ENCODE measurements at regions of chr19 and their contacts with region 1.

Region 1: GRCh38 chr19:3275583-3276340 is 51.3 kb downstream of the CELF5 start:
- DNase-seq: peak; percentile 99
- ATAC-seq: peak; percentile 83
- H3K4me3 Mint-ChIP-seq: peak overlapping the region; percentile 73
- H3K27ac Mint-ChIP-seq: peak overlapping the region; percentile 80
- H3K4me1 Mint-ChIP-seq: peaks cover 8% of the 10 kb centered on the region
- H3K27me3 Mint-ChIP-seq: peaks cover 9% of the 10 kb centered on the region

Region 2: DNA sequence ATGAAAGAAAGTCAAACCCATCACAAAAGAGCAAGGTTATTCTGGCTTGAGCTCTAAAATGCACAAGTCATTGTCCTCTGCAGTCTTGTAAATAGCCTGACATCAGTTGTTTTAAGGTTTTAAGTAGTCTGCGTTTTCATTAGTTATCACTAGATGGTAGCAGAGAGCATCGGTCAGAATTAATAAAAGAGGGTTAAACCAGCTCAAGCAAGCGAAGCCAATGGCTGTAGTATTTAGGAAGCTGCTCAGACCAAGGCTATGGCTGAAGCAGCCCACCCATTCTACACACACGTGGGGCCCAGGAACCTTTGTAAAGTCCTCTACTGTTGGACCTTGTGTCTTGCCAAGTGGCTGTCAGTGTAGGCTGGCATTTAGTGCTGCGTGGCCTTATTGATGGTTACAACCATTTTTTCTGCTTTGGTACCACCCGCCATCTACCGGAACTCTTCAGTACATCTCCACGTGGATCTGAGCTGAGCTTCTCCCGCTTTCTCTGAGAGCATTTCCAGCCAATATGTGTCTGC is 388.3 kb before region 1 on chr19:
- CTCF ChIA-PET with region 1: no interaction called
- POLR2A ChIA-PET with region 1: no interaction called
- intact Hi-C with region 1: no loop called
- DNase-seq: no peak
- ATAC-seq: peak; percentile 66
- H3K4me3 Mint-ChIP-seq: no peak overlapping the region
- H3K27ac Mint-ChIP-seq: peak overlapping the region; percentile 2
- H3K4me1 Mint-ChIP-seq: peaks cover 5% of the 10 kb centered on the region
- H3K27me3 Mint-ChIP-seq: no peaks in the 10 kb centered on the region

Region 3: DNA sequence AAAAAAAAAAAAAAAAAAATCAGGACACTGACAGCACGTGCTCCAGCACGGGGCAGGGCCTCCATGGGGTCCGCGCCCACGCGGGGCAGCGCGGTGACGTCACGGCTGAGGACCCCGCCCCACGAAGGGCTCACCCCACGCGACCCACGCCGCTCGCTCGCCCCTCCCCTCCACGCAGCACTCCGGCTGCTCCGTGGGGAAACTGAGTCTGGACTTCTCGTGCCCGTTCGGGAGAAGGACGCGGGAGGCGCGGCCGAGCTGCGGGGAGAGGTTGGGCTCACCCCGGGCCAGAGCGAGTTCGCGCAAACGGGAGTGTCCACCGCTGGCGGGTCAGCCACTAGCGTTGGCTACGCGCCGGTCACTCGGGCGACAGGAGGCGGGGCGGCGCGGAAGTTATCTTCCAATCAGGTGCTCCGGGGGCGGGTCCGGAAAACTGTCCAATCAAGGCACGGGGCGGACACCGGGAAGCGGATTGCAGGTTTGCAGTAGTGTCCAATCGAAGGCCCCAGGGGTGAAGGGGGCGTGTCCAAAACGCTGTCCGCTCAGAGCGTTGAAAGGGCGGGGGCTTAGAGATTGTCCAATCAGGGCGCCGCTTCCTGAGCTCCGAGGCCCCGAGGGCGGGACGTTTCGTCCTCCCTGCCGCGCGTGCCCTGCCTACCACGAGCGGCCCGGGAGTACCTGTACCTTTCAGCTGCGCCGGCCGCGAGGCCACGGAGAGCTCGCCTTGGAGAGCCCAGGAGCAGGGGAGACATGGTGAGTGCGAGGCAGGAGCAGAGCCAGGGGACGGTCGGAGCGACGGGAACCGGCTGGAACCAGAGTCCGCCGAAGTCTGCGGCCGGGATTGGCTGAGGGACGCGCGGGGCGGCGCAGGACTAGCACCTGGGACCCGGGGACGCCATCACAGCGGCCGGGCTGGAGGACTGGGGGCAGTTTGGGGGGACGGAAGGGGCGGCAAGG is 375.2 kb before region 1 on chr19 and contains the start of gene ZNF57:
- CTCF ChIA-PET with region 1: no interaction called
- POLR2A ChIA-PET with region 1: no interaction called
- intact Hi-C with region 1: loop called in 1 of 2 experiments (anchors 1 kb)
- DNase-seq: peak; percentile 100
- ATAC-seq: peak; percentile 99
- H3K4me3 Mint-ChIP-seq: peak within 1 kb of the TSS; percentile 98
- H3K27ac Mint-ChIP-seq: peak within 1 kb of the TSS; percentile 96
- H3K4me1 Mint-ChIP-seq: peaks cover 18% of the 10 kb centered on the region
- H3K27me3 Mint-ChIP-seq: no peaks in the 10 kb centered on the region
- total RNA-seq, gene ZNF57: 5.9 to 7.1 TPM

Region 4: GRCh38 chr19:3224346-3225168 is 51.2 kb before region 1 on chr19 and contains the start of gene CELF5:
- CTCF ChIA-PET with region 1: interaction called, 3 read pairs
- POLR2A ChIA-PET with region 1: no interaction called
- intact Hi-C with region 1: loop called in 1 of 2 experiments (anchors 2 kb)
- DNase-seq: peak; percentile 77
- ATAC-seq: peak; percentile 77
- H3K4me3 Mint-ChIP-seq: no peak within 1 kb of the TSS
- H3K27ac Mint-ChIP-seq: no peak within 1 kb of the TSS
- H3K4me1 Mint-ChIP-seq: no peaks in the 10 kb centered on the region
- H3K27me3 Mint-ChIP-seq: peaks cover 24% of the 10 kb centered on the region
- total RNA-seq, gene CELF5: 0.18 to 0.21 TPM

Region 5: DNA sequence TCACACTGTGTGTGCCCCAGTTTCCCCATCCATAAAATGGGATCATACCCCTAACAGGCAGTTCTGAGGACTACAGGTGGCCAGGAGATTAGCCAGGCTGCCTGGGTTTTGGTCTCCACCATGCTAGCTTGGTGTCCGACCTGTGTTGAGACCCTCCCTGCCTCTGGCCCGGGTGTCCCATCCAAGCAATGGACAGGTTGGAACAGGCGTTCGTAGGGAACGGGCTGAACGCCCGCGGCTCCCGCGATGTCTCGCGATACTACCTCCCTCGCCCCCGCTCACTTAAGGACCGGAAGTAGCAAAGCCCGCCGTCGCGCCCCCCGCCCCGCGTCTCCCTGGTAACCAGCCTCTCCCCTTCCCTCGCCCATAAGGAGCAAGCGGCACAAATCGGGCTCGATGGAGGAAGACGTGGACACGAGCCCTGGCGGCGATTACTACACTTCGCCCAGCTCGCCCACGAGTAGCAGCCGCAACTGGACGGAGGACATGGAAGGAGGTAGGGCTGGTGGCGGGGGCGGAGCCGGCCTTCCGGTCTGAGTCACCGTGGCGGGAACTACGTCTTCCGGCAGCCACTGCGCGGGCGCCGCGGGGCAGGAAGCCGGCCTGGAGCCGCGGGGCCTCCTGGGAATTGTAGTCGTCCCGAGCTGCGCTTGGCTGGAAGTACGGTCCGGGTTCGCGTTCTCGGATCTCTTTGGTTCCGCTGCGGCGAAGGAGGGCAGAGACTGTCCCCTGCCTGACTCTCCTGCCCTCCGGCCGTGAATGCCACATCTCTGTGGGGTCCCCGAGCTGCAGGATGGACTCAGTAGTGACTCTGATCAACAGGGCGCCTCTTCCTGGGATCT is 159.2 kb after region 1 on chr19:
- CTCF ChIA-PET with region 1: no interaction called
- POLR2A ChIA-PET with region 1: no interaction called
- intact Hi-C with region 1: loop called in 1 of 2 experiments (anchors 1 kb)
- DNase-seq: peak; percentile 98
- ATAC-seq: peak; percentile 96
- H3K4me3 Mint-ChIP-seq: peak overlapping the region; percentile 84
- H3K27ac Mint-ChIP-seq: peak overlapping the region; percentile 99
- H3K4me1 Mint-ChIP-seq: peaks cover 13% of the 10 kb centered on the region
- H3K27me3 Mint-ChIP-seq: no peaks in the 10 kb centered on the region

Region 6: GRCh38 chr19:4182084-4182810 is 906.5 kb after region 1 on chr19 and contains the starts of genes ANKRD24 and SIRT6:
- CTCF ChIA-PET with region 1: no interaction called
- POLR2A ChIA-PET with region 1: no interaction called
- intact Hi-C with region 1: loop called in 1 of 2 experiments (anchors 2 kb)
- DNase-seq: peak; percentile 98
- ATAC-seq: peak; percentile 84
- H3K4me3 Mint-ChIP-seq: peak within 1 kb of the TSS; percentile 92
- H3K27ac Mint-ChIP-seq: peak within 1 kb of the TSS; percentile 93
- H3K4me1 Mint-ChIP-seq: peaks cover 30% of the 10 kb centered on the region
- H3K27me3 Mint-ChIP-seq: no peaks in the 10 kb centered on the region
- total RNA-seq, gene ANKRD24: 1.1 to 1.3 TPM
- total RNA-seq, gene SIRT6: 26.2 to 29.4 TPM

Measured in activated CD4-positive, alpha-beta T cell treated with anti-CD3 and anti-CD28 coated beads for 36 hours (primary cell).